CD8-positive, alpha-beta memory T cell (primary cell): ENCODE measurements at regions of chr1 and their contacts with region 1.

Region 1: DNA sequence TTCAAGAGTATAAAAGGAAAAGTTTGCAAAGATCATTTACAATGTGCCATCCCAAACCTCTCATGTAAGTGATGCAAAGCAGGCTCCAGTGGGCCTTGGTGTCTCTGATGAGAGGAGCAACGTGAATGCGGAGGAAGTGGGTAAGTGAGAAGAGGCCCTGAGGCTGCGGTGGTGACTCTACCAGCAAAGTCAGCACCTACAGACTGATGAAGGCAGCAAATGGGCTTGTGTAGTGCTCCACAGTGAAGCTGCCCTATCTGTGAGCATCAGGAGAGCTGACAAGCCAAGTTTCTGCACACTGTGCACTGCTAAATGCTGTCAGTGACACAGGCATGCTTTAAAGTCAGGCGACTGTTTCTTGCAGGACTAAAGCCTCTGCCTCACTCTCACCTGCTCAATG is 15.6 kb upstream of the RAP1A start:
- DNase-seq: peak; percentile 54 to 88 (median 79)
- H3K4me3 ChIP-seq: no peak overlapping the region
- H3K4me3 Mint-ChIP-seq: peak overlapping the region in 6 of 7 donors; percentile 66 to 82 (median 70)
- H3K27ac ChIP-seq: no peak overlapping the region
- H3K27ac Mint-ChIP-seq: peak overlapping the region; percentile 85 to 97 (median 92)
- H3K4me1 ChIP-seq: peaks cover 73% of the 10 kb centered on the region
- H3K4me1 Mint-ChIP-seq: peaks cover 72 to 79% (median 77%) of the 10 kb centered on the region in 3 donors
- H3K27me3 ChIP-seq: no peaks in the 10 kb centered on the region
- H3K27me3 Mint-ChIP-seq: no peaks in the 10 kb centered on the region

Region 2: DNA sequence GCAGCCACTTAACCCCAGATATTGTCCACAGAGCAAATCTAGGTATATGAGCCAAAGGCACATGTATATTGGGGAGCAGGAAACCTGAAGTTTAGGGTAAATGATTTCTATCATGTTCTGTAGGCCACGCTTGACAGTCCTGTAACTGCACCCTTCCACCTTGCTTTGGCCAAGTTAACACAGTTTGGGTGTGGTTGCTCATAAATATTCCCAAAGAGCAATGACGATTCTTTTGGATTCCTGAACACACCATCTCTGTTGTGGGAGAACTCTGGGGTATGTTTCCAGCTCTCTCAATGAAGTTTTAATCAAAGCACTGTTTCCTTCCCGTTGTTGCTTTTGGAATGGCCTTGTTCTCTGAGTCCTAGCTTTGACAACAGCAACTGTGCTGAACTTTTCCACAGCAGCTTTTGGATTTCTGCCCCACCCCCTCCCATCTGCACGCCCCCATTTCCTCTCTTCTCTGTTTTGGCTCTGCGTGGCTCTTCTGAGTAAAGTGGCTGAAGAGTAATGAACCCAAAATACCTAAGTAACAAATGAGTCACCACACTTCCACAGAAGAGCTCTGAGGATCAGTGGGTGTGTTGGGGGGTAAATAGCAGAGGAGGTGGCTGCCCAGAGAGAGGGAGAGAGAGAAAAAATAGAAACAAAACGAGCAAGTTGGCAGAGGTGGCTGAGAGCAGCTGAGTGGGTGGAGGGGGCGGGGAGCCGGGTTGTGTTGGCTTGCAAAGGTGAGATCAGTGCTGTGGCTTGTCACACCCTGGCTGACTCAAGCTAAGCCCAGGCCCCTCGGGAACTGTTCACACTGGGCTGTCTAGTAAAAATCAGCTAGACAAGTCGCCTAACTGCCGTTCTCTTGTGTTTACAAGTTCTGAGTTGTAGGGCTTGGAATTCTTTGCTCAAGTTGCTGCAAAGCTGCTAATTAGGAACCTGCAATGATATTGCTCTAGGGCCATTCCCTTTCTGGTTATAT is 11.3 kb before region 1 on chr1:
- CTCF ChIA-PET with region 1: interaction called, 18 read pairs
- POLR2A ChIA-PET with region 1: interaction called, 42 read pairs
- DNase-seq: peak; percentile 61 to 96 (median 83)
- H3K4me3 ChIP-seq: peak overlapping the region; percentile 17
- H3K4me3 Mint-ChIP-seq: peak overlapping the region; percentile 50 to 74 (median 66)
- H3K27ac ChIP-seq: peak overlapping the region; percentile 38
- H3K27ac Mint-ChIP-seq: peak overlapping the region; percentile 74 to 97 (median 88)
- H3K4me1 ChIP-seq: peaks cover 70% of the 10 kb centered on the region
- H3K4me1 Mint-ChIP-seq: peaks cover 56 to 69% (median 64%) of the 10 kb centered on the region in 3 donors
- H3K27me3 ChIP-seq: no peaks in the 10 kb centered on the region
- H3K27me3 Mint-ChIP-seq: no peaks in the 10 kb centered on the region

Region 3: GRCh38 chr1:111690306-111690617 is 86.3 kb after region 1 on chr1:
- CTCF ChIA-PET with region 1: no interaction called
- POLR2A ChIA-PET with region 1: no interaction called
- DNase-seq: no peak
- H3K4me3 ChIP-seq: no peak overlapping the region
- H3K4me3 Mint-ChIP-seq: peak overlapping the region in 1 of 7 donors; percentile 1
- H3K27ac ChIP-seq: no peak overlapping the region
- H3K27ac Mint-ChIP-seq: peak overlapping the region; percentile 13 to 78 (median 64)
- H3K4me1 ChIP-seq: peaks cover 8% of the 10 kb centered on the region
- H3K4me1 Mint-ChIP-seq: peaks cover 63 to 90% (median 82%) of the 10 kb centered on the region in 3 donors
- H3K27me3 ChIP-seq: no peaks in the 10 kb centered on the region
- H3K27me3 Mint-ChIP-seq: no peaks in the 10 kb centered on the region